Dorsolateral prefrontal cortex (tissue), 120 donors: ENCODE measurements at regions of chrX and their contacts with region 1.

Region 1: GRCh38 chrX:38654302-38654701 is 93.0 kb downstream of the TSPAN7 start:
- DNase-seq: peak in 1 of 10 donors; percentile 9
- H3K4me3 ChIP-seq: no peak overlapping the region
- H3K27ac ChIP-seq: no peak overlapping the region
- H3K27me3 ChIP-seq: peaks cover 0 to 58% (median 4%) of the 10 kb centered on the region in 45 donors
- CTCF ChIP-seq: peak in 55 of 56 donors; percentile 27 to 67 (median 57)

Region 2: GRCh38 chrX:38458071-38458470 is 196.2 kb before region 1 on chrX:
- intact Hi-C with region 1: loop called in 1 of 2 experiments (anchors 5 kb)
- DNase-seq: peak in 1 of 10 donors; percentile 26
- H3K4me3 ChIP-seq: no peak overlapping the region
- H3K27ac ChIP-seq: no peak overlapping the region
- H3K27me3 ChIP-seq: peaks cover 0 to 60% (median 6%) of the 10 kb centered on the region in 45 donors
- CTCF ChIP-seq: peak in 50 of 56 donors; percentile 20 to 65 (median 44)

Region 3: DNA sequence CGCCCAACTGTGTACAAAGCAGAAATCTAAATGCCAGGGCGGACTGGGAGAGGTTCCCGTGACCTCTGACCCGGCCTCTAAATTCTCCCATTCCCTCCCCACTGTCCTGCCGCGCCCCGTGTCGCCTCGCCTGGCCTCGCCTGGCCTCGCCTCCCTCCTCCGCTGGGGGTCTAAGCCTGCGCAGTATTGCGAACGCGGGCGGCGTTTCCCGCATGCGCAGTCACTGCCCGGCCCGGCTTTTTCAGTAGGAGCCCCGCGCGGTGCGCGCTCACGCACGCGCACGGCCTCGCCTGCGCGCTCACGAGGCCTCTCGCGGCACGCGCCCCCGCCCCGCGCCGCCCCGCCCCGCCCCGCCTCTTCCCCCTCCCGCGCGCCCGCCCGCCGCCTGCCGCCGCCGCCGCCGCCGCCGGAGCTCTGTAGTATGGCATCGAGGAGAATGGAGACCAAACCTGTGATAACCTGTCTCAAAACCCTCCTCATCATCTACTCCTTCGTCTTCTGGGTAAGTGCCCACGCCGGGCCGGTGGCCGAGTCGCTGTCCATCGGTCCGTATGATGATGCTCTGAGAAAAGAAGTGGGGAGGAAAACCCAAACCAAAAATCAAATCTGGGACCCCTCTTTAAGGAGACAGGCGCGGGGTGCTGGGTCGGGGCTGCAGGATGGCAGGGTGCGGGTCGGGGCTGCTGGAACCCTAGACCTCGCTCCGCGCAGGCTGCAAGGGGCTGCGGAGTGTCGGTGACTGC is 93.0 kb before region 1 on chrX and contains the start of gene TSPAN7:
- intact Hi-C with region 1: loop called in 1 of 2 experiments (anchors 5 kb)
- DNase-seq: peak; percentile 67 to 86 (median 74)
- H3K4me3 ChIP-seq: peak within 1 kb of the TSS; percentile 35 to 78 (median 65)
- H3K27ac ChIP-seq: peak within 1 kb of the TSS in 57 of 59 donors; percentile 20 to 88 (median 72)
- H3K27me3 ChIP-seq: peaks cover 0 to 50% (median 9%) of the 10 kb centered on the region in 45 donors
- CTCF ChIP-seq: peak in 10 of 56 donors; percentile 8 to 38 (median 24)
- total RNA-seq, gene TSPAN7: 204 to 737 (median 578) TPM